Psoas muscle (tissue), 8 donors: ENCODE measurements at regions of chr14 and their contacts with region 1.

Region 1: GRCh38 chr14:35292051-35292769 is at the start of gene PSMA6:
- DNase-seq: peak; percentile 99
- ATAC-seq: peak; percentile 98 to 100 (median 99)
- H3K4me3 ChIP-seq: peak within 1 kb of the TSS; percentile 83
- H3K27ac ChIP-seq: peak within 1 kb of the TSS; percentile 92
- H3K4me1 ChIP-seq: peaks cover 33% of the 10 kb centered on the region
- H3K27me3 ChIP-seq: no peaks in the 10 kb centered on the region
- CTCF ChIP-seq: no peak
- total RNA-seq, gene PSMA6: 176 to 276 (median 262) TPM

Region 2: DNA sequence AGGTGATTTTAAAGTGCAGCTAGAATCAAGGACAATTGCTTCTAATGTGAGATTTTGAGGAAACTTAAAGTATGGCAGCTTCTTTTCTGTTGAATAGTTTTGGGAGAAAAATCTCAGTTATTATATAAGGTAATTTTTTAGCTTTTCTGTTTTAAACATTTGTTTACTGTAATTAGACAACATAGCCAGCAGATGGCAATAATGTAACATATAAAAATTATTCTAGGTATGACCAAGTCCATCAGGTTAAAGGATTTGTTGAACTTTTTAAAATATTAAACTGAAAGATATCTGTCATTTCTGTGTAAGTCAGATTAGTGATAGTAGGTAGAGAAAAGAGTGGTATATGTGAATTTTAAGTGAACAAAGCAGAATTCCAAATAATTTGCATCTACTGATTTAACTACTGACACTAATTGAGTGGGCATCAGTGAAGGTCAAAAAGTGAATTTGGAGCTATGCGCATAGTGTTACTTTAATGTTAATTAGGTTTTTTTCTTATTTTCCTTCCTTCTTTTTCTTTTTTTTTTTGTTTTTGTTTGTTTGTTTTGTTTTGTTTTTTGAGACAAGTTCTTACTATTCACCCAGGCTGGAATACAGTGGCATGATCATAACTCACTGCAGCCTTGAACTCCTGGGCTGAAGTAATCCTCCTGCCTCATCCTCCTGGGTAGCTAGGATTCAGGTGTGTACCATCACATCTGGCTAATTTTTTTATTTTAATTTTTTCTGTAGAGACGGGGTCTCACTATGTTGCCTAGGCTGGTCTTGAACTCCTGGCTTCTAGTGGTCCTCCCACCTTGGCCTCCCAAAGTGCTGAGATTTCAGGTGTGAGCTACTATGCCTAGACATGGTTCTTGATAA is 151.3 kb before region 1 on chr14:
- intact Hi-C with region 1: loop called in 1 of 2 experiments (anchors 10 kb)
- DNase-seq: no peak
- ATAC-seq: peak in 1 of 4 donors; percentile 67
- H3K4me3 ChIP-seq: no peak overlapping the region
- H3K27ac ChIP-seq: no peak overlapping the region
- H3K4me1 ChIP-seq: no peaks in the 10 kb centered on the region
- H3K27me3 ChIP-seq: no peaks in the 10 kb centered on the region
- CTCF ChIP-seq: peak; percentile 63

Region 3: DNA sequence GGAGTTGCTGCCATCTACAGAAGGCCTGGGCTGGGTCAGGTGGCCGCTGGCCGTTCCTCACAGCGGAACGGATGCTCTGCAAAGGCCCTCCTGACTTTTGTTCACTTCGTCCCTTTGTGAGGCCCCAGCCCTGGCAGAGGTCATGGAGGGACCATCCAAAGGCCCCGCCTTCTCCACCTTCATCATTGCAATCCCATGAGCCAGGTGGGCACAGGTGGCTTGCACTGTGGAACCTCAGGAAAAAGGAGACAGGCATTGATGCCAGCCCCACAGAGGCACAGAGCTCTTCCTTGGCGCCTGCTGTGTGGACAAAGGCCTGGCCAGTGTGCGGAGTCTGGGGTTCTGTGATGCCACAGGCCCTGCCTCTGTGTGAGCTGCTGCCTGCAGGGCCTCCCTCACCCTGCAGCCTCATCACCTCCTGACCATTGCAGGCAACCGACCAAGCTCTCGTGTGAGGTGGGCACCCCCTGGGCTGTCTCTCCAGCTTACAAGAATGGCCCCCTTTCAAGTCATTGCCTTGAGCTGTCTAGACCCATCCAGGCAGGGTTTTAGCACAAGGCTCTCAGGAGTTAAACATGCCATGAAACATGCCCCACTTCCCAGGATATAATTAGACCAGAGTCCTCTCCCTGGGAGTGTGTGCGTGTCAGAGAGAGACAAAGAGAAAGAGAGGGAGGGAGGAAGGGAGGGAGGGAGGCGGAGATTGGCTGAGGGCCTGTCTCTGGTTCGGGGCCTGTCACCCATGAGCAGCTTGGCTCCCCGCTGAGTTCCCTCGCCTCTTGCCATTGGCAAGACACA is 93.0 kb after region 1 on chr14:
- intact Hi-C with region 1: loop called (anchors 5 kb)
- DNase-seq: peak; percentile 85 to 96
- ATAC-seq: peak; percentile 85 to 89 (median 88)
- H3K4me3 ChIP-seq: peak overlapping the region; percentile 47
- H3K27ac ChIP-seq: peak overlapping the region; percentile 98
- H3K4me1 ChIP-seq: peaks cover 37% of the 10 kb centered on the region
- H3K27me3 ChIP-seq: no peaks in the 10 kb centered on the region
- CTCF ChIP-seq: no peak

Region 4: DNA sequence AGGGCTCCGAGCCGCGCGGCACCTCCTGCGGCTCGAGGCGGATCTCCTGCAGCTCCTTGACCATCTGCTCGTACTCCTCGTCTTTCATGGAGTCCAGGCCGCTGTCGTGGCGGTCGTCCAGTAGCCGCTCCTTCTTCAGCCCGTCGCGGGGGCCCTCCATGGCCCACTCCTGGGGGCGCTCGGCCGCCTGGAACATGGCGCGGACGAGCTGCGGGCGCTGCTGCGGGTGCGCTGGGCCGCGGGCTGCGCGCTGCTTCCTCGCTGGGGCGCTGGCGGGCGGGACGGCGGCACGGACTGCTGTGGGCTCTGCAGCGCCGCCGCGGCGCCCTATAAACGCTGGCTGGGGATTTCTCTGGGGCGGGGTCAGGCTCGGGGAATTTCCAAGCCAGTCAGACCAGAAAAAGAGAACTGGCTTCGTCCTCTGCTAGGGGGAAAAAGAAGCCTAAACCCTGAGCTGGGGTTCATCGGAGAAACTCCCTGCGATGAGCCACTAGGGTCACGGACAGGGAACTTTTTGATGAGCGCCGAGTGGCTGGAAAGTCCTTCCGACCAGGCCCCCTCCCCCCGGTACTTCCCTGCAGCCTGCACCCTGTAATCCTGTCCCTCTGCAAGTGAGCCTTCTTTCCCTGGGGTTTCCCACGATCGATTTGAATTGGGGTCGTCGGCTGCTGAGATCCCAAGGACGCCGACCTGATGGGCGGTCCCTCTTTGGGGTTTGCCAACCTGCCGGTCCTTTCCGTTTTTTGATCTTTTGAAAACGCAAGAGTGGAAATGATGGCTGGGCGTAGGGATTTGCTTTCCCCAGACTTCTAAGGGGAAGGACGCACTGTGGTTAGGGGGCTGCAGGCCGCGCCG is 112.5 kb after region 1 on chr14 and contains the start of gene NFKBIA:
- intact Hi-C with region 1: loop called (anchors 1 to 2 kb)
- DNase-seq: peak; percentile 92 to 97
- ATAC-seq: peak; percentile 61 to 76 (median 62)
- H3K4me3 ChIP-seq: peak within 1 kb of the TSS; percentile 98
- H3K27ac ChIP-seq: peak within 1 kb of the TSS; percentile 100
- H3K4me1 ChIP-seq: peaks cover 36% of the 10 kb centered on the region
- H3K27me3 ChIP-seq: no peaks in the 10 kb centered on the region
- CTCF ChIP-seq: peak; percentile 26
- total RNA-seq, gene NFKBIA: 48.7 to 144 (median 96.4) TPM